Esophagus muscularis mucosa (tissue), 4 donors: ENCODE measurements at regions of chr12 and their contacts with region 1.

Region 1: DNA sequence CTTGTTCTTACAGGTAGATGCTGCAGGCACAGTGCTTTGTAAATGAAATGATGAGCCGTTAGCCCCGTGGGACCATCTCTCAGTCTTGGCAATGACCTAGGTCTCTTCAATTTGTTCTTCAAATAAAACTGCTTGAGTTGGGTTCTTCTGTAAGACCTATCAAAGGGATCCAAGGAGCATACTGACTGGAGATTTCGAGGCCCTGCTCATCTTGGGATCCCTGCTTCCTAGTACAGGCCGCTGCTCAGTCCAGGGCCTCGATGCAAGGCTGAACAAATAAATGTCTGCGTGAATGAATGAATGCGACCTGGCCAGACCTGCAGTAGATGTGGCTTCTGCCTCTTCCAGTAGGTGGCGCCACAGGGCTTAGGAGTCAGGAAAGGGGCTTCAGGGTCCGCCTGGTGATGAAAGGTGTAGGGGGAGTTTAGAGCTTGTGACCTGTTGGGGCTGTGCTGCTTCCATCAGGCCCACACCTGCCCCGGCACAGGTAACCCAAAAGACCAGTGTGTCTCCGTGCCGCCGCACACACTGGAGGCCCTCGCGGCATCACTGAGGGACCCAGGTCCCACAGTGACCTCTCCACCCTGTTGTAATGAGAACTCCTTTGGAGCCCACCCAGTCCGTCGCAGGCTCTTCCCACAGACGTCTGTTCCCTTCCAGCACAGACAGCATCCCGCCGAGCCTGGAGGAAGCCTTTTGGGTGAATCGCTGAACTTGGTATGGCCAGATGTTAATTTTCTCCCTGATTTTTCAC is 4.4 kb downstream of the CACNA1C start:
- DNase-seq: no peak
- H3K4me3 ChIP-seq: peak overlapping the region; percentile 31 to 77 (median 54)
- H3K27ac ChIP-seq: peak overlapping the region; percentile 92 to 96 (median 95)
- H3K4me1 ChIP-seq: peaks cover 43 to 78% (median 65%) of the 10 kb centered on the region in 4 donors
- H3K27me3 ChIP-seq: no peaks in the 10 kb centered on the region
- CTCF ChIP-seq: peak; percentile 84 to 86 (median 86)
- EP300 ChIP-seq: no peak
- POLR2A ChIP-seq: no peak

Region 2: DNA sequence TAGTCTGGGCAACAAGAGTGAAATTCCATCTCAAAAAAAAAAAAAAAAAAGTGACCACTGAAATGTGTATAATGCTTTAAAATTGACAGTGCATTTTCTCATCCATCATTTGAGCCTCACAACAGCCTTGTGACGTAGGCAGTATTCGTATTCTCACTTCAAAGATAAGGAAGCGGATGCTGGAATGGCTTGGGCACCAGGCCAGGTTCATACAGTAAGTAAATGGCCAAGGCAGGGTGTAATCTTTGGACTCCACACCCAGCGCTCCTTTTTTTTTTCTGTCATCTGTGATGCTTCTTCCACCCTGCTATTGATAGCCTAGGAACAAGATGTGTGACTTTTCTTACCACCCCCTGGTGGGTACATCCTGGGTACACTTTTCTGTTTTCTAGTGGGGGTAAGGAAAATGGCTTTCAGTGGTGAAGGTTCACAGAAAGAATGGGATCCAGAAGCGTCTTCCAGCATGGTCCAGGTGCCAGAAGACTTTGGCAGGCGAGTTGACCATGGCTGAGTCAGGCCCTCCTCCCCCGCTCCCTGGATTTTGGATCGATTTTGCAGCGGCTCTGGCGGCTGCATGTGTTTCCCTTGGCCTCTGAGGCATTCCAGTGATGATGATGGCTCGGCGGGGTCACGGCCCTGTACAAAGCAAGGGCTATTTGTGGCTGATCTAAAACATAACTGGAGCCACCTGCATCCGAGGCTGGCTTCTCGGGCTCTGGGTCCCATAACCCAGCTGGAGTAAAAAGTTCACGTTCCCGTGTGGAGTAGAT is 106.1 kb after region 1 on chr12:
- intact Hi-C with region 1: loop called (anchors 5 kb)
- DNase-seq: peak; percentile 95
- H3K4me3 ChIP-seq: no peak overlapping the region
- H3K27ac ChIP-seq: peak overlapping the region; percentile 79 to 86 (median 84)
- H3K4me1 ChIP-seq: peaks cover 51 to 78% (median 67%) of the 10 kb centered on the region in 4 donors
- H3K27me3 ChIP-seq: no peaks in the 10 kb centered on the region
- CTCF ChIP-seq: no peak
- EP300 ChIP-seq: no peak
- POLR2A ChIP-seq: no peak

Region 3: GRCh38 chr12:2273288-2273687 is 216.1 kb after region 1 on chr12:
- intact Hi-C with region 1: loop called (anchors 5 kb)
- DNase-seq: no peak
- H3K4me3 ChIP-seq: no peak overlapping the region
- H3K27ac ChIP-seq: peak overlapping the region; percentile 49 to 86 (median 72)
- H3K4me1 ChIP-seq: peaks cover 34 to 55% (median 42%) of the 10 kb centered on the region in 4 donors
- H3K27me3 ChIP-seq: no peaks in the 10 kb centered on the region
- CTCF ChIP-seq: peak; percentile 60 to 74 (median 61)
- EP300 ChIP-seq: no peak
- POLR2A ChIP-seq: no peak

Region 4: GRCh38 chr12:2284857-2285256 is 227.6 kb after region 1 on chr12:
- intact Hi-C with region 1: loop called (anchors 5 kb)
- DNase-seq: no peak
- H3K4me3 ChIP-seq: no peak overlapping the region
- H3K27ac ChIP-seq: peak overlapping the region; percentile 71 to 80 (median 78)
- H3K4me1 ChIP-seq: peaks cover 76 to 80% (median 78%) of the 10 kb centered on the region in 4 donors
- H3K27me3 ChIP-seq: no peaks in the 10 kb centered on the region
- CTCF ChIP-seq: peak; percentile 58 to 69 (median 61)
- EP300 ChIP-seq: no peak
- POLR2A ChIP-seq: no peak